ENCODE measurements at regions of chr10 and their contacts with region 1.

Region 1: DNA sequence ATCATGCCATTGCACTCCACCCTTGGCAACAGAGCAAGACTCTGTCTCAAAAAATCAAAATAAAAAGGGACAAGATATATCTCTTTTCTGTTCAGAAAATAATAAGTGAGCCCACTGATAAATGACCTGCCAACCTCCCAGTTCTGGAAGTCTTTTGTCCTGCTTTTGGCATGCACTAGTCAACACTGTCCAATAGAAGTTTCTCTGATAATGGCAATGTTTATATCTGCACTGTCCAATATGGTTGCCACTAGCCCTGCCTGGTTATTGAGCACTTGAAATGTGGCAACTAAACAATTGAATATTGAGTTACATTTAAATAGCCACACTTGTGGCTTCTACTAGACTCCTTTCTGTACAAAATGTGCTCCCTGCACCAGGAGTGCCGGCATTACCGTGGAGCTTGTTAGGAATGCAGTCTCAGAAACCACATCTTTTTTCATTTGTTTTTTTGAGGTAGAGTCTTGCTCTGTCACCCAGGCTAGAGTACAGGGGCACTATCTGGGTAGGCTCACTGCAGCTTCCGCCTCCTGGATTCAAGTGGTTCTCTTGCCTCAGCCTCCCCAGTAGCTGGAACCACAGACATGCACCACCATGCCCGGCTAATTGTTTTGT is 229.7 kb downstream of the CACNB2 start:
- DNase-seq: no peak
- ATAC-seq: peak in 2 of 4 donors; percentile 17 to 32
- H3K4me3 ChIP-seq: no peak overlapping the region
- H3K27ac ChIP-seq: peak overlapping the region in 1 of 12 donors; percentile 11
- H3K4me1 ChIP-seq: peaks cover 0 to 15% (median 3%) of the 10 kb centered on the region in 12 donors
- H3K27me3 ChIP-seq: no peaks in the 10 kb centered on the region
- CTCF ChIP-seq: no peak
- POLR2A ChIP-seq: no peak

Region 2: DNA sequence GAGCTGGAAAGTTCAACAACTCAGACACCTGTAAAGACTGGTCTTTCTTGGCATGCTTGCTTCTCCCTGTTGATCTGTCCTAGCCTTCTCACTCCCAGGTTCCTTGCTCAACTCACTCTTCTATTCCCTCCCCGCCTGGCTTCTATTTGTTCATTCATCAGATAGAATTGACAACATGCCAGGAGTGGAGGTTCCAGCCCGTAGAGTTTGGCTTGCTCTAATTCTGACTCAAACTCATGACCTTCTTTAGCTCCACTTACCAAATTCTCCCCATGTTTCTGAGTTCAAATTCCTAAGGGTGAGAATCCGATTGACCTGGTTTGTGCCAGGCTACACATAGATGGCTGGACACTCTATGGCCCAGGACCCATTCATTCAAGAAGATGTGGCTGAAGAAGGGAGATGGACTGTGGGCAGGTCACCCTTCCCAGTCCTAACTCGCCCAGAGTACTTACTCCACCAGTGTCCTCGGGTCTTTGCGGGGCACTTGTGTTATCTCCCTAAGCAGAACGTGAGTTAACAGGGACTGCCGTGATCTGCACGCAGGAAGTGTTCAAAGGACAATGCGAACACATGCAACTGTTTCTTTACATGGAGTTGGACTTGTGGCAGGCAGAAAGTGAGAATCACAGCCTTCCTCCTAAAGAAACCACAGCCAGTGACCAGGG is 621.9 kb before region 1 on chr10:
- intact Hi-C with region 1: loop called in 1 of 10 experiments (anchors 5 kb)
- DNase-seq: no peak
- ATAC-seq: peak in 2 of 4 donors; percentile 42
- H3K4me3 ChIP-seq: no peak overlapping the region
- H3K27ac ChIP-seq: no peak overlapping the region
- H3K4me1 ChIP-seq: peaks cover 0 to 24% (median 2%) of the 10 kb centered on the region in 12 donors
- H3K27me3 ChIP-seq: no peaks in the 10 kb centered on the region
- CTCF ChIP-seq: no peak
- POLR2A ChIP-seq: no peak

Region 3: GRCh38 chr10:18340496-18341051 is 29.4 kb before region 1 on chr10:
- intact Hi-C with region 1: no loop called
- DNase-seq: peak in 4 of 5 donors; percentile 27 to 78 (median 52)
- ATAC-seq: peak; percentile 84 to 95 (median 90)
- H3K4me3 ChIP-seq: peak overlapping the region; percentile 41 to 75 (median 56)
- H3K27ac ChIP-seq: peak overlapping the region; percentile 47 to 89 (median 80)
- H3K4me1 ChIP-seq: peaks cover 0 to 6% (median 0%) of the 10 kb centered on the region in 12 donors
- H3K27me3 ChIP-seq: no peaks in the 10 kb centered on the region
- CTCF ChIP-seq: no peak
- POLR2A ChIP-seq: peak in 1 of 2 donors; percentile 72

Measured in heart left ventricle (tissue), 16 donors.